ENCODE measurements at regions of chr17 and their contacts with region 1.

Region 1: DNA sequence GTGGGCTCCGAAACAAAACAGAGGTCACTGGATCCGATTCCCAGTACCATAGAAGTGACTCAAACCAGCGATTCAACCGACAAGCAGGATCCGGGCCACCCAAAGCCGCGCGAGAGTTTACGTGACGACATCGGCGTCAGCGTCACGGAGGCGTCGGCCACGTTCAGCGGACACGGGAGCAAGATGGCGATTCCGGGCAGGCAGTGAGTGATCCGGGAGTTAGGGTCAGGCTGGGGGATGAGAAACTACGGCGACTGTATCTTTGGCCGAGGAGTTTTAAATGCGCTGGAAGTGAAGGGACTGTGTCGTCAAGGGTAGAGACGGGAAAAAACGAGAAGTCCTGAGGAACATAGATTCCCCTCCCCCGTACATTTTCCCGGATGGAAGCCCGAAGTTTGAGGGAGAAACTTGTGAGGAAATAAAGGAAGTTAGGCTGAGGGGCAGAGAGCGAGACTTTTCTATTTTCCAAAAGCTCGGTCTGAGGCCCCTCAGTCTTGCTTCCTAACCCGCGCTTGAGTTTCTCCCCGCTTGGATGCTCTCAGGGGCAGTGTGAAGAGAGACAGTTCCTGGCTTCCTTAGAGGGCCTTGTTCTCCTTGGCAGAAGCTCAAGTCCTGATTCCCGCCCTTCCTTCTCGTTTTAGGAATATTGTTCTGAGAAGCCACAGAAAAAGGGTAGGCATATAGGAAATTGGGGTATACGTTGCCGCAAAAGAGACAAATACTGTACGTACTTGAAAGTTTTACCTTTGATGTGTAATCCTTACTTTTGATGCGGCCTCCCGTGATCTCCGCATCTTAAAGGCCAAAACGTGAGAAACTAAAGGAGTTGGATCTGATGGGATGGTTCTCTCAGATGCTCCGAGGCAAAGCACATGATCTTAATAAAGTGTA is at the start of gene NSRP1:
- DNase-seq: peak; percentile 98
- H3K4me3 Mint-ChIP-seq: peak within 1 kb of the TSS; percentile 96
- H3K27ac Mint-ChIP-seq: peak within 1 kb of the TSS; percentile 96
- H3K4me1 Mint-ChIP-seq: peaks cover 45% of the 10 kb centered on the region
- H3K27me3 Mint-ChIP-seq: no peaks in the 10 kb centered on the region
- total RNA-seq, gene NSRP1: 29.8 and 31.7 TPM in 2 replicates

Region 2: DNA sequence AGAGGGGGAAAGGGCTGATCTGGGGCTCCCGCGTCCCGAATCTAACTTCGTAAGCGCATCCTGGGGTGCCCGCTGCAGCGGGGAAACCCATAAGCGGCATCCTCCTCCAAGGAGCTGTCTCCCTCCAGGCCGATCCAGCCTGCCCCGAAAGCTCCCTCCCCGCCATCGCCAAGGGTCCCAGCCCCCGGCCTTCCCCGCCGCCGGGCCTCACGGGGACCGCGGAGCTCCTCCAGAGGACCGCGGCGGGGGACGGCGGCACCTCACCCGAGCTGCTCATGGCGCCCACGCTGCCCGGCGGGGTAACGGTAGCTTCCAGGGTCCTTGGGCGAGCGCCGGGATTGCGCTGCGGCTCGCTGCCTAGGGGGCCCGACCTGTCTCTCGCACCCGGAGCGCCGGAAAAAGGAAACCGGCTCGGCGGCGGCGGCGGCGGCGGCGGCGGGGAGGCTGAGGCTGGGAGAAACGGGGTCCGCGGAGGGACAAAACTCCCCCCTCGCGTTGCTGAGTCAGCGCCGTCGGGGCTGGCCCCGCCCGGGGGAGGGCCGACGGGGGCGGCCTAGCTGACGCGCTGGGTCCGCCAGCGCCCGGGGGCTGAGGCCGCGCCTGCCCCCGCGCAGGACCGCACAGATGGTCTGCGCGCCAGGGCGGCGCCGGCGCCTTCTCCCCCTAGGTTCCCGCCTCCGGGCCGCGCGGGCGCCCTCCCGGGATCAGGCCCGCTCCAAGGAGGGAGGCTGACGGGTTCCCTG is 174.8 kb after region 1 on chr17 and contains the start of gene BLMH:
- intact Hi-C with region 1: loop called (anchors 5 kb)
- DNase-seq: peak; percentile 96
- H3K4me3 Mint-ChIP-seq: peak within 1 kb of the TSS; percentile 91
- H3K27ac Mint-ChIP-seq: peak within 1 kb of the TSS; percentile 91
- H3K4me1 Mint-ChIP-seq: peaks cover 15% of the 10 kb centered on the region
- H3K27me3 Mint-ChIP-seq: no peaks in the 10 kb centered on the region
- total RNA-seq, gene BLMH: 68.2 and 72.8 TPM in 2 replicates